Sigmoid colon (tissue), 7 donors: ENCODE measurements at regions of chr15 and their contacts with region 1.

Region 1: GRCh38 chr15:90174140-90174875 is 26.8 kb upstream of the SEMA4B start:
- DNase-seq: peak; percentile 99
- H3K4me3 ChIP-seq: peak overlapping the region in 3 of 4 donors; percentile 13 to 32 (median 21)
- H3K27ac ChIP-seq: peak overlapping the region; percentile 90 to 96 (median 94)
- H3K4me1 ChIP-seq: peaks cover 0 to 45% (median 27%) of the 10 kb centered on the region in 4 donors
- H3K27me3 ChIP-seq: no peaks in the 10 kb centered on the region
- CTCF ChIP-seq: no peak
- EP300 ChIP-seq: peak; percentile 89 to 98 (median 94)
- POLR2A ChIP-seq: no peak

Region 2: GRCh38 chr15:89971592-89971997 is 202.7 kb before region 1 on chr15:
- intact Hi-C with region 1: no loop called
- DNase-seq: no peak
- H3K4me3 ChIP-seq: no peak overlapping the region
- H3K27ac ChIP-seq: no peak overlapping the region
- H3K4me1 ChIP-seq: peaks cover 0 to 9% (median 0%) of the 10 kb centered on the region in 4 donors
- H3K27me3 ChIP-seq: no peaks in the 10 kb centered on the region
- CTCF ChIP-seq: peak in 3 of 4 experiments; percentile 13 to 41 (median 21)
- EP300 ChIP-seq: no peak
- POLR2A ChIP-seq: no peak

Region 3: DNA sequence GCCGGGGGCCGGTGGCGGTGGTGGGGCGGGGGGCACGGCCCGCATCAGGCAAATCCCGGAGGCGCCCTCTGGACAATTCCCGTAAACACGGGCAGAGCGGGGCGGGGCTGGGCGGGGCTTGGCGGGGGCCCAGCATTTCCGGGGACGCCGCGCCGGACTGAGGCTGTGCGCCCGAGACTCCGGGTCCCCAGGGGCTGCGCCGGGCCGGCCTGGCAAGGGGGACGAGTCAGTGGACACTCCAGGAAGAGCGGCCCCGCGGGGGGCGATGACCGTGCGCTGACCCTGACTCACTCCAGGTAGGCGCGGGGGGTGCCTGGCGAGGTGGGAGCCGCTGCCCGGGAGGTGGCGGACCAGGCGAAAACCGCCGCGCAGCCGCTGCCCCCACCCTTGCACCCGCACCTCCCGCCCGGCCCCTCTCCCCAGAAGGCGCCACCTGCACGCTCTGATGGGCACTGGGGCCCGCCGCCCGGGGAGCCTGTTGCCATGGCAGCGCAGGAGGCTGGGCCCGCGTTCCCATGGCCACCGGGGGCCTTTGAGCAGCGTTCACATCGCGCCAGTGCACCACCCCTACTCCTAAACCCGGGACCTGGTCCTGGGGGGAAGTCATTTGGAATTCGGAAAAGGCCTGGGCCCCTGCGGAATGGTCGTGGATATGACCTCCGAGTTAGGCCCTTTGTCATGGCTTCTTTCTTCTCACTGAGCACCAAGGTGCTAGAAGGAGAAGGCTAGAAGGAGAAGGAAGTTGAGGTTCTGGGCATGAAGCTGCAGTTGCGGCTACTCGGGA is 10.7 kb after region 1 on chr15:
- intact Hi-C with region 1: loop called (anchors 1 kb)
- DNase-seq: peak; percentile 85
- H3K4me3 ChIP-seq: peak overlapping the region; percentile 74 to 94 (median 87)
- H3K27ac ChIP-seq: peak overlapping the region; percentile 96 to 99 (median 97)
- H3K4me1 ChIP-seq: peaks cover 0 to 58% (median 52%) of the 10 kb centered on the region in 4 donors
- H3K27me3 ChIP-seq: no peaks in the 10 kb centered on the region
- CTCF ChIP-seq: no peak
- EP300 ChIP-seq: peak in 1 of 4 donors; percentile 31
- POLR2A ChIP-seq: peak; percentile 50 to 77

Region 4: GRCh38 chr15:90249203-90249863 is 75.0 kb after region 1 on chr15 and contains the start of gene TTLL13:
- intact Hi-C with region 1: no loop called
- DNase-seq: peak; percentile 98
- H3K4me3 ChIP-seq: peak within 1 kb of the TSS; percentile 34 to 66 (median 52)
- H3K27ac ChIP-seq: peak within 1 kb of the TSS; percentile 20 to 64 (median 39)
- H3K4me1 ChIP-seq: peaks cover 0 to 15% (median 8%) of the 10 kb centered on the region in 4 donors
- H3K27me3 ChIP-seq: no peaks in the 10 kb centered on the region
- CTCF ChIP-seq: peak in 2 of 4 experiments; percentile 4 to 33
- EP300 ChIP-seq: no peak
- POLR2A ChIP-seq: peak in 1 of 2 donors; percentile 20
- total RNA-seq, gene TTLL13: not detected

Region 5: GRCh38 chr15:90286678-90287077 is 112.4 kb after region 1 on chr15:
- intact Hi-C with region 1: no loop called
- DNase-seq: no peak
- H3K4me3 ChIP-seq: no peak overlapping the region
- H3K27ac ChIP-seq: no peak overlapping the region
- H3K4me1 ChIP-seq: peaks cover 0 to 6% (median 2%) of the 10 kb centered on the region in 4 donors
- H3K27me3 ChIP-seq: no peaks in the 10 kb centered on the region
- CTCF ChIP-seq: peak in 2 of 4 experiments; percentile 16 to 20
- EP300 ChIP-seq: no peak
- POLR2A ChIP-seq: no peak

Region 6: DNA sequence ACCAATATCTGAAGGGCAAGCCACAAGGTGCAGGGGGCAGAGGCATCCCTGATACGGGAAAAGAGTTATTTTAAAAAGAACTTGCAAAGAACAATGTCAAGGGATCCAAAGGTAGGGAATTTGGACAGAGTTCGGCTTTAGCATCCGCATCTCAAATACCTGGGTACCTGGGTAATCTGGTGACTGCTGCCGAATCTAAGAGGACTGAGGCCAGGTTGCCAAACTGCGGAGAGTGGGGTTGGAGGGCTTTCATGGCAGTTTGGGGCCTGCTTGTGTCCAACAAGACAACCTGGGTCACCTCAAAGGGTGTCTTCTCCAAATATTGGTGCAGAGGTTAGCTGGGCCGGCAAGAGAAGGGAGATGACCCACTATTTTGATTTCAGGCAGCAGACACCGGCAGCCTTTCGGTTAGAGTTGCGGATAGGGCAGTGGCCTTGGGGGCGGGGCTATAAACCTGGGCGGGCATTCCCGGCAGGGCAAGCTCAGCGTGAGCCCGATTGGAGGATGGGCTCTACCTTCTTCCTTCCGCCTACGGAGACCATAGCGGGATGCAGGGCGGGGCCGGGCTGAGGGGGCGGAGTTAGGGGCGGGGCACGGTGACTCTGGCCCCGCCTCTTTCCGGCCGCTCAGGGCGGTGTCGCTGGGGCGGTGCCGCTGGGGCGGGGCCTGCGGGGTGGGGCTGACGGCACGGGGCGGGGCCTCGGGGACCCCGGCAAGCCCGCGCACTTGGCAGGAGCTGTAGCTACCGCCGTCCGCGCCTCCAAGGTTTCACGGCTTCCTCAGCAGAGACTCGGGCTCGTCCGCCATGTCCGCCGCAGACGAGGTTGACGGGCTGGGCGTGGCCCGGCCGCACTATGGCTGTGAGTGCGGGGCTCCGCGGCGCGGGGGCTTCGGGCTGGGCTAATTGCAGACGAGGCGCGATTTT is 213.5 kb after region 1 on chr15 and contains the start of gene IQGAP1:
- intact Hi-C with region 1: no loop called
- DNase-seq: peak; percentile 99
- H3K4me3 ChIP-seq: peak within 1 kb of the TSS; percentile 86 to 99 (median 90)
- H3K27ac ChIP-seq: peak within 1 kb of the TSS; percentile 96 to 100 (median 96)
- H3K4me1 ChIP-seq: peaks cover 0 to 44% (median 38%) of the 10 kb centered on the region in 4 donors
- H3K27me3 ChIP-seq: no peaks in the 10 kb centered on the region
- CTCF ChIP-seq: no peak
- EP300 ChIP-seq: no peak
- POLR2A ChIP-seq: peak; percentile 78 to 79
- total RNA-seq, gene IQGAP1: 135 to 283 (median 183) TPM